ENCODE measurements at regions of chr1 and their contacts with region 1.

Region 1: DNA sequence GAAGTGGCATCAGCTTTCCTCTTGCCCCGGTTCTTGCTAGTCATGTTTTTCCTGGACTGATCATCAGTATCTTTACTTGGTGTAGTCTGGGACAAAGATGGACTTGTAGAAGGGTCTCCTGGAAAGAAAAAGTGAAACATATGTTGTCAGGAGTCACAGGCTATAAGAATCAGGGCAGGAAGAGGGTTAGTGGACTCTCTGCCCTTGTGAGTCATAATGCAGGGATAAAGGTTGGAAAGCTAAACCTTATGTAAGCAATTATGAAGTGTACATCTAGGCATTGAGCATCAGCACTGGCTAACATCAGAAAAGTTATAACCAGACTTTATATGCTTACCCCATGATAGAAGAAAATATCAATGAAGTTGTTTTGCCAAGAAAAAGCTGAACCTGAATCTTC is 51.2 kb downstream of the XKR8 start:
- DNase-seq: no peak
- ATAC-seq: no peak
- H3K4me3 ChIP-seq: no peak overlapping the region
- H3K27ac ChIP-seq: no peak overlapping the region
- H3K4me1 ChIP-seq: no peaks in the 10 kb centered on the region
- H3K27me3 ChIP-seq: no peaks in the 10 kb centered on the region

Region 2: DNA sequence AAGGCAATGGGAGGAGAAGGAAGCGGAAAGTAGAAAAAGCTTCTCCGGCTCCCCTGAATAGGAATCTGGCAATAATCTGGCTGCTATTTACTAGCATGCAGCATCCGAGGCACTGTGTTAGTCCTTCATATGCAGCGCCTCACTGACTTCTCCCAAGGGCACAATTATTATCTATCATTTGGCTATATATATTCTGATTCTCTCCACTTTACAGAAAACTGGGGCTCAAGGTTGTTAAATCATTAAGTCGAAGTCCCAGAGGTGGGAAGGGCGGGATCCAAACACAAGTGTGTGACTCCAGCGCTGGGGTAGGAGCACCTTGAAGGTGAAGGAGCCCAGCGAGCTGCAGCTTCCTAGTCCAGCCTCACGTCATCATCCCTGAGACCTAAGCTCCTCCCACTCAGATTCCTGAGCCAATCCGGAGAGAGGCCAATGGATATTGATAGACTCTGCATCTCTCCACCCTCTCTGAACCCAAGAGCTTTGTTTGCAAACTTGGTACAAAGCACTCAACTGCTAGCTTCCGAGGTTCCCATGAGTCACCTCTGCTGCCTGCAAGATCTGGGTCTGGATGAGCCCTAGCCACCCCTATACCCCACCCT is 94.0 kb after region 1 on chr1:
- intact Hi-C with region 1: no loop called
- DNase-seq: no peak
- ATAC-seq: no peak
- H3K4me3 ChIP-seq: peak overlapping the region; percentile 18 to 55
- H3K27ac ChIP-seq: peak overlapping the region in 1 of 2 donors; percentile 47
- H3K4me1 ChIP-seq: no peaks in the 10 kb centered on the region
- H3K27me3 ChIP-seq: no peaks in the 10 kb centered on the region

Region 3: DNA sequence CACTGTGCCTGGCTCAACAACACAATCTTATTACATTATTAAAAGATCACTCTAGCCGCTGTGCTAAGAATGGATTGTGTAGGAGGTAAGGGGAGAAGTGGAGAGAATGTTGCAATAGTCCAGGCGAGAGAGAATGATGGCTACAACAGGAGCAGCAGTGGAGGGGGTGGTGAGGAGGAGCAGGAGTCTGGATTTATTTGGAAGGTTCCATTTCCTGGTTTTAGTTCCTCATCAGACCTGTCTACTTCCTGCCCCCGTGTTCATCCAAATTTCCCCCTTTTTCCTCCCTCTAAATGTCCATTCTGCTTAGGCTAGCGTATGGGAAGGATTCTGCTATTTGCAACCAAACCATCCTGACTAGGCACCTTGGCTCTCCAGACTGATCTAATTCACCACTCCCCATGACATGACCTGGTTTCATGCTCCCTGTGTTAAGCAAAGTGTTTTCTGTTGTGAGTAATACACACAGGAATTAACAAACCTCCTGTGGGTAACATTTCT is 112.5 kb after region 1 on chr1:
- intact Hi-C with region 1: no loop called
- DNase-seq: no peak
- ATAC-seq: no peak
- H3K4me3 ChIP-seq: no peak overlapping the region
- H3K27ac ChIP-seq: no peak overlapping the region
- H3K4me1 ChIP-seq: no peaks in the 10 kb centered on the region
- H3K27me3 ChIP-seq: no peaks in the 10 kb centered on the region

Region 4: GRCh38 chr1:28208818-28209441 is 198.0 kb after region 1 on chr1:
- intact Hi-C with region 1: loop called in 1 of 2 experiments (anchors 10 kb)
- DNase-seq: no peak
- ATAC-seq: peak; percentile 67
- H3K4me3 ChIP-seq: no peak overlapping the region
- H3K27ac ChIP-seq: no peak overlapping the region
- H3K4me1 ChIP-seq: no peaks in the 10 kb centered on the region
- H3K27me3 ChIP-seq: no peaks in the 10 kb centered on the region

Measured in aorta (tissue), 5 donors.